ENCODE measurements at regions of chr14 and their contacts with region 1.

Region 1: GRCh38 chr14:77097700-77098528 is at the start of gene CIPC:
- DNase-seq: peak; percentile 100
- H3K4me3 Mint-ChIP-seq: peak within 1 kb of the TSS; percentile 94
- H3K27ac Mint-ChIP-seq: peak within 1 kb of the TSS; percentile 91
- H3K4me1 Mint-ChIP-seq: peaks cover 38% of the 10 kb centered on the region
- H3K27me3 Mint-ChIP-seq: peaks cover 3% of the 10 kb centered on the region
- total RNA-seq, gene CIPC: 9.6 to 12.8 TPM

Region 2: GRCh38 chr14:76910371-76910890 is 187.5 kb before region 1 on chr14:
- CTCF ChIA-PET with region 1: interaction called, 14 read pairs
- POLR2A ChIA-PET with region 1: no interaction called
- DNase-seq: no peak
- H3K4me3 Mint-ChIP-seq: no peak overlapping the region
- H3K27ac Mint-ChIP-seq: peak overlapping the region; percentile 53
- H3K4me1 Mint-ChIP-seq: peaks cover 55% of the 10 kb centered on the region
- H3K27me3 Mint-ChIP-seq: no peaks in the 10 kb centered on the region

Region 3: GRCh38 chr14:77086017-77086736 is 11.7 kb before region 1 on chr14:
- CTCF ChIA-PET with region 1: interaction called, 15 read pairs
- POLR2A ChIA-PET with region 1: interaction called, 3 read pairs
- DNase-seq: no peak
- H3K4me3 Mint-ChIP-seq: no peak overlapping the region
- H3K27ac Mint-ChIP-seq: no peak overlapping the region
- H3K4me1 Mint-ChIP-seq: peaks cover 9% of the 10 kb centered on the region
- H3K27me3 Mint-ChIP-seq: peaks cover 3% of the 10 kb centered on the region

Region 4: GRCh38 chr14:77124345-77125280 is 26.7 kb after region 1 on chr14:
- CTCF ChIA-PET with region 1: interaction called, 14 read pairs
- POLR2A ChIA-PET with region 1: interaction called, 20 read pairs
- DNase-seq: peak; percentile 76
- H3K4me3 Mint-ChIP-seq: peak overlapping the region; percentile 76
- H3K27ac Mint-ChIP-seq: no peak overlapping the region
- H3K4me1 Mint-ChIP-seq: peaks cover 43% of the 10 kb centered on the region
- H3K27me3 Mint-ChIP-seq: peaks cover 40% of the 10 kb centered on the region